ENCODE measurements at regions of chr11 and their contacts with region 1.

Region 1: GRCh38 chr11:118621071-118621783 is 13.8 kb downstream of the PHLDB1 start:
- DNase-seq: peak in 1 of 2 experiments; percentile 89
- H3K4me3 ChIP-seq: peak overlapping the region; percentile 41 to 82 (median 70)
- H3K27ac ChIP-seq: peak overlapping the region; percentile 50; the same call in 1 of the 2 replicates
- H3K4me1 ChIP-seq: peaks cover 5 to 39% (median 30%) of the 10 kb centered on the region in 4 experiments
- H3K27me3 ChIP-seq: no peaks in the 10 kb centered on the region
- CTCF ChIP-seq: no peak
- EP300 ChIP-seq: peak in 1 of 2 experiments; percentile 20; a peak in 1 of 3 replicates
- POLR2A ChIP-seq: peak in 1 of 2 experiments; percentile 34; a peak in 1 of 3 replicates
- RAD21 ChIP-seq: no peak

Region 2: DNA sequence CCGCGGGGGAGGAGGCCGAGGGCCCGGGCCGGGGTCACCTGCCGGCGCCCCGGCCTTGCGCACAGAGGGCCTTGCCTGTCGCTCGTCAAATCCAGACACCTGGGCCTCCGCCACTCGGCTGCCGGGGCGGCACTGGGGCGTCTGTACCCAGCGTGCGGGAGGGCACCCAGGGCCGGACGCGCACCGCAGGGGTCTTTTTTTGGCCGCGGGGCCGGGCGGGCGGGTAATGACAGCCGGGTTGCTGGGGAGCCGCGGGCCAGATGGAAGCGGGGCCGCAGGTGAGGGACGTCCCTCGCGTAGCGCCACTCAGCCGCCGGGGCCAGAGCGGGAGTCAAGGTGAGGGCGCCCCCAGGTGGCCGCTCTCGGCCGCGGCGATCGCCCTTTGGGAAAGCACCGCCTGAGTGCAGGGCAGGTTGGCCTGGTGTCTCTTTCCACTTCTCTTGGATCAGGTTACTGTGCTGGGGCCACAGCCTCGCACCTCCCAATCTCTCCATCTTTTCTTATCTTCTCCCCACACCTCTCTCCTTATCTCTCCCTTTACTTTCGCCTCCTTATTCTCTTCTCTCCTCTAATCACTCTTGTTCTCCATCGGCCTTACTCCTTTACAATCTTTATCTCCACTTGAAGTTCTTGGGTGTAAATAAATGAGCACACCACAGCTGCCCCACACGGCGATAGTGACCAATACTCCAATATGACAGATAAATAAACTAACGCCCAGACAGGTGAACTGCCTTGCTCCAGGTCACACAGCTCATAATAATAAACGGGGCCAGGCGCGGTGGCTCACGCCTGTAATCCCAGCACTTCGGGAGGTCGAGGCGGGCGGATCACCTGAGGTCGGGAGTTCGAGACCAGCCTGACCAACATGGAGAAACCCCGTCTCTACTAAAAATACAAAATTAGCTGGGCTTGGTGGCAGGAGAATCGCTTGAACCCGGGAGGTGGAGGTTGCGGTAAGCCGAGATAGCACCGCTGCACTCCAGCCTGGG is 10.1 kb before region 1 on chr11:
- CTCF ChIA-PET with region 1: interaction called, 155 read pairs
- POLR2A ChIA-PET with region 1: interaction called, 574 read pairs
- DNase-seq: peak; percentile 60 to 98
- H3K4me3 ChIP-seq: peak overlapping the region; percentile 14 to 66 (median 48); a peak in 7 of 8 replicates
- H3K27ac ChIP-seq: no peak overlapping the region
- H3K4me1 ChIP-seq: peaks cover 24 to 59% (median 34%) of the 10 kb centered on the region in 4 experiments
- H3K27me3 ChIP-seq: peaks cover 42 to 55% (median 50%) of the 10 kb centered on the region in 4 experiments
- CTCF ChIP-seq: peak; percentile 91 to 96 (median 91)
- EP300 ChIP-seq: no peak
- POLR2A ChIP-seq: no peak
- RAD21 ChIP-seq: peak; percentile 67 to 79; a peak in 3 of 4 replicates

Region 3: DNA sequence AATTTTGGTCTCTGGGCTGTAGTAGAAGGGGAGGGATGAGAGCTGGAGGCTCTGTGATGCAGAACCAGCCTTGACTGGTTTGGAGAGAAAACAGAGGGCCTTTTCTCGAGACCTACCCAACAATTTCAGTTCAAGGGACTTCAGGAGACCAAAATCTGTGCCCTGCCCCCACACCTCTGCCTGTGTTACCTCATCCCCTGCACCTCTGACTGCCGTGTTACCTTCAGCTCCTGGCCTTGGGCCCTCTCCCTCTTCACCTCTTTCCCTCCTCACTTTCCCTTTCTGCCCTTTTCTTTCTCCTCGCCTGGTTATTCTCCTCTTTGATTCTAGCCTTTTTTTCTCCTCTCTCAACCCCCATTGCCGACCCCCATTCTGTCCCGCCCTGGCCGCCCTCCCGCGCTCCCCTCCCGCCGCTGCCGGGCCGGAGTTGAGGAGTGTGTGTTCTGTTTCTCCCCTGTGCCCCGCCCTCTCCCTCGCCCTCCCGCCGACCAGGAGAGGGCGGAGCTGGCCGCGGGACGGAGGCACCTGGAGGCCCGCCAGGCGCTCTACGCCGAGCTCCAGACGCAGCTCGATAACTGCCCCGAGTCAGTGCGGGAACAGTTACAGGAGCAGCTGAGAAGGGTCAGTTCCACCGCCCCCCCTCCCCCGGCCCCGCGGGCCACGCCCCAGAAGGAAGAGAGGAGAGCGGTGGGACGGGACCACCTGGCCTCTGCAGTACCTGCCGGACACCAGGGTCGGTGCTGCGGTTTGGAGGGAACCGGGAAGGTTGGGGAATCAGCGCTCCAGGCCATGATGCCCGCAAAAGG is 13.4 kb after region 1 on chr11:
- CTCF ChIA-PET with region 1: interaction called, 57 read pairs
- POLR2A ChIA-PET with region 1: interaction called, 574 read pairs
- DNase-seq: peak; percentile 80 to 89
- H3K4me3 ChIP-seq: peak overlapping the region; percentile 36 to 72 (median 62)
- H3K27ac ChIP-seq: peak overlapping the region; percentile 89
- H3K4me1 ChIP-seq: peaks cover 16 to 23% (median 19%) of the 10 kb centered on the region in 4 experiments
- H3K27me3 ChIP-seq: no peaks in the 10 kb centered on the region
- CTCF ChIP-seq: peak in 2 of 3 experiments; percentile 34 to 59; a peak in 3 of 4 replicates
- EP300 ChIP-seq: no peak
- POLR2A ChIP-seq: peak; percentile 50 to 76
- RAD21 ChIP-seq: 0 out of 4 replicates have a peak, but pooled peaks of 1 of the 2 experiments have one; percentile 8

Region 4: GRCh38 chr11:118640332-118641154 is 19.3 kb after region 1 on chr11:
- CTCF ChIA-PET with region 1: interaction called, 57 read pairs
- POLR2A ChIA-PET with region 1: interaction called, 574 read pairs
- DNase-seq: no peak
- H3K4me3 ChIP-seq: no peak overlapping the region
- H3K27ac ChIP-seq: no peak overlapping the region
- H3K4me1 ChIP-seq: peaks cover 5 to 9% (median 6%) of the 10 kb centered on the region in 4 experiments; a peak in 6 of 7 replicates
- H3K27me3 ChIP-seq: no peaks in the 10 kb centered on the region
- CTCF ChIP-seq: peak; percentile 5 to 35 (median 26); a peak in 3 of 4 replicates
- EP300 ChIP-seq: no peak
- POLR2A ChIP-seq: no peak
- RAD21 ChIP-seq: peak; percentile 41 to 57